SK-N-SH (cell line): ENCODE measurements at regions of chr21 and their contacts with region 1.

Region 1: DNA sequence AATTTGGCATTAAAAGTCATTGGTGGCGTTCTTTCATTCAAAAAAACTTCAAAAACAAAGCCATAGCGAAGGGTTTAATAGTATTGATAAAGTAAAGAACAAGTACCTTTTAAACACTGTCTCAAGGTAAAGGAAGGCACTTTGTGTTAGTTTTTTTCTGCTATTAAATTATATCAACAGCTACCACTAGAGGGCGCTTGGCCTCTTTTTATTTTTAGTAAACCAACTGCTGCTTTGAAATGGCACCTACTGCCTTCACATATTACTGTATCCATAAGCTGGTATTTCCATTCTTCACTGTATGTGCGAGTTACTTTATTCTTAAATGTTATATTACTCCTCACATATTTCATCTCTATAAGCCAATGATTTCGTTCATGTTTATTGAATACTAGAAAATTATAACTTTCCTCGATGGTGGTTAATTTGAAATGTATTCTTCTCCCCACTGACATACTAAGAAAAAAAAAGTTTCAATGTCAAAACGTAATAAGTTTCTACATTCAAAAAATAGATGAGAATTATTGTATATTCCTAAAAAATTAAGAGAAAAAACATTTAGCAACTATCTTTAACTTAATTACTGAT is 125.7 kb upstream of the CXADR start:
- DNase-seq: peak; percentile 52
- H3K4me3 ChIP-seq: no peak overlapping the region; a peak in 1 of 4 replicates
- H3K27ac ChIP-seq: no peak overlapping the region
- H3K4me1 ChIP-seq: no peaks in the 10 kb centered on the region
- H3K27me3 ChIP-seq: no peaks in the 10 kb centered on the region; the same call in 1 of the 2 replicates
- CTCF ChIP-seq: peak; percentile 83
- EP300 ChIP-seq: no peak
- RAD21 ChIP-seq: peak; percentile 95

Region 2: DNA sequence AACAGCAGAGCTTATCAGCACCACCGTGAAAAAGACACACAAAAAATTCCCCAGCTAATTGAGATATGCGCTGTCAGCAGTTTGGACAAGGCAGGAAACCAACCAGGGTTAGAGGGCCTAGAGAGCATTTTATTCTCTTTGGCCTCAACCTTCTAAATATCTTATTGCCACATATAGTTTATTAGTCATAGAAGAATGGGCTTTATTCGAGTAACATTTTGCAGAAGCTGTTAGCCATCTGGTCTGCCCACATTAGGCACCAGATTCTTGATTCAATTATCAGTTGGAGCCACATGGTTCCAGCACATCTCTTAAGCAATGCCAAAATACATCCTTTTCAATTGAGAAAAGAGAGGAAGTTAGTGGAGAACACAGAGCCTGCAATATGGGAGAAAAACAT is 15.8 kb after region 1 on chr21:
- CTCF ChIA-PET with region 1: interaction called, 14 read pairs
- POLR2A ChIA-PET with region 1: no interaction called
- DNase-seq: peak; percentile 5
- H3K4me3 ChIP-seq: no peak overlapping the region
- H3K27ac ChIP-seq: no peak overlapping the region
- H3K4me1 ChIP-seq: no peaks in the 10 kb centered on the region
- H3K27me3 ChIP-seq: no peaks in the 10 kb centered on the region
- CTCF ChIP-seq: no peak
- EP300 ChIP-seq: no peak
- RAD21 ChIP-seq: no peak

Region 3: GRCh38 chr21:17512253-17513213 is 125.4 kb after region 1 on chr21 and contains the start of gene CXADR:
- CTCF ChIA-PET with region 1: interaction called, 14 read pairs
- POLR2A ChIA-PET with region 1: no interaction called
- DNase-seq: peak; percentile 93
- H3K4me3 ChIP-seq: peak within 1 kb of the TSS; percentile 58 to 65
- H3K27ac ChIP-seq: peak within 1 kb of the TSS in 1 of 2 experiments; percentile 40; a peak in 1 of 4 replicates
- H3K4me1 ChIP-seq: peaks cover 0 to 7% of the 10 kb centered on the region in 2 experiments; a peak in 2 of 4 replicates
- H3K27me3 ChIP-seq: 0 out of 2 replicates have a peak, but pooled peaks cover 7% of the 10 kb centered on the region
- CTCF ChIP-seq: peak; percentile 32
- EP300 ChIP-seq: no peak
- RAD21 ChIP-seq: no peak
- polyA plus RNA-seq, gene CXADR: 1.1 and 2.0 TPM in 2 replicates

Region 4: GRCh38 chr21:17554679-17555465 is 167.7 kb after region 1 on chr21:
- CTCF ChIA-PET with region 1: interaction called, 42 read pairs
- POLR2A ChIA-PET with region 1: no interaction called
- DNase-seq: peak; percentile 61
- H3K4me3 ChIP-seq: no peak overlapping the region
- H3K27ac ChIP-seq: peak overlapping the region in 1 of 2 experiments; percentile 81; a peak in 2 of 4 replicates
- H3K4me1 ChIP-seq: peaks cover 0 to 13% of the 10 kb centered on the region in 2 experiments; a peak in 2 of 4 replicates
- H3K27me3 ChIP-seq: no peaks in the 10 kb centered on the region
- CTCF ChIP-seq: peak; percentile 61
- EP300 ChIP-seq: peak in 1 of 2 experiments; percentile 76; a peak in 2 of 4 replicates
- RAD21 ChIP-seq: peak; percentile 66

Region 5: DNA sequence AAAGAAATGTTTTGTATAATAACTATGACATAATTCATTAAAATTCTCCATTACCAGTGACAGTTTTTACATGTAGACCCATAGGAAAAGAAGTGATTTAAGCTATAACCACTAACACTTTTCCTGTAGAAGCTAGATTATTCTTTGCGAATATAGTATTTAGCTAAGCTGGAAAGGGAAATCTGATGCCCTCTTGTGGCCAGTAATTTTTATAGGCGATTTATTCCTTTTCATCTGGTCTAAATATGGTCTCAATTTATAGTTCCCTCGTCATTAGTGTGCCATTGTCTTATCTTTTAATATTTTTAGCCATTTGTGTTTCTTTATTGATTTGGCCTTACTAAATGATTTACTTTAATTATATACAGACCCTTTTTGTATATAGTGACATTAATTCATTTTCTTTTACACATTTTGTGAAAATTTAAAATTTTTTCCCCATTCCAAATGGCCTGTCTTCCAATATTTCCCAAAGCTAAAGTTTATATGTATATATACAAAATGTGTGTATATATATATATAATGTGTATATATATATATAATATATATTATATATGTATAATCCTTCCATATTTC is 198.8 kb after region 1 on chr21:
- CTCF ChIA-PET with region 1: interaction called, 91 read pairs
- POLR2A ChIA-PET with region 1: no interaction called
- DNase-seq: peak; percentile 35
- H3K4me3 ChIP-seq: no peak overlapping the region; a peak in 1 of 4 replicates
- H3K27ac ChIP-seq: no peak overlapping the region
- H3K4me1 ChIP-seq: no peaks in the 10 kb centered on the region
- H3K27me3 ChIP-seq: no peaks in the 10 kb centered on the region
- CTCF ChIP-seq: peak; percentile 73
- EP300 ChIP-seq: no peak
- RAD21 ChIP-seq: peak; percentile 76